ENCODE measurements at regions of chr9 and their contacts with region 1.

Region 1: GRCh38 chr9:108468402-108468801 is 387.4 kb downstream of the ACTL7B start:
- DNase-seq: peak; percentile 12
- CTCF ChIP-seq: no peak

Region 2: GRCh38 chr9:108105885-108106284 is 362.5 kb before region 1 on chr9:
- CTCF ChIA-PET with region 1: no interaction called
- POLR2A ChIA-PET with region 1: no interaction called
- DNase-seq: no peak
- CTCF ChIP-seq: no peak

Region 3: DNA sequence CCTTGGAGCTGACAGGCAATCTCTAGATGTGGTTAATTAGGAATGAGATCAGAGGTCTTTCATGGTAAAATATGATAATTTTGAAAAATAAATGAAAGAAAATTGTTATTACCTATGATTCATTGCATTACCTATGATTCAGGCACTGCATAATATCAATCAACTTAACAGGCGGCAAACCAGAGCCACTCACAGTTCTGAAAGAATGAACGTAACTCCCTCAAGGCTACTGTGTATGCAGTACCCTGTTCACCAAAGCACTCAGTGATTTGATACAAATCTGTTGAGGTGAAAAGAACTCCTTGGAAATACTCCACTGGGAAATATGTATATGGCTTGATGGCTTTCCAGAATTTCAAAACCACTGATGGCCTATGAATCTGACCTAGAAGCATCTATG is 11.5 kb before region 1 on chr9:
- CTCF ChIA-PET with region 1: interaction called, 12 read pairs
- POLR2A ChIA-PET with region 1: no interaction called
- DNase-seq: no peak
- CTCF ChIP-seq: no peak

Region 4: GRCh38 chr9:108521063-108521590 is 52.7 kb after region 1 on chr9:
- CTCF ChIA-PET with region 1: no interaction called
- POLR2A ChIA-PET with region 1: no interaction called
- DNase-seq: no peak
- CTCF ChIP-seq: no peak